Naive thymus-derived CD8-positive, alpha-beta T cell (primary cell): ENCODE measurements at regions of chr7 and their contacts with region 1.

Region 1: GRCh38 chr7:92528188-92528957 is at the starts of genes PEX1 and RBM48:
- DNase-seq: peak; percentile 88 to 98 (median 96)
- ATAC-seq: peak; percentile 88 to 90
- H3K4me3 Mint-ChIP-seq: peak within 1 kb of the TSS; percentile 81 to 96 (median 94)
- H3K27ac Mint-ChIP-seq: peak within 1 kb of the TSS; percentile 94 to 99 (median 98)
- H3K4me1 Mint-ChIP-seq: peaks cover 21 to 50% (median 36%) of the 10 kb centered on the region in 4 donors
- H3K27me3 Mint-ChIP-seq: no peaks in the 10 kb centered on the region
- polyA plus RNA-seq, gene PEX1: 7.9 to 10.1 (median 9.7) TPM
- polyA plus RNA-seq, gene RBM48: 25.6 to 28.9 (median 27.9) TPM

Region 2: GRCh38 chr7:92245487-92246362 is 282.6 kb before region 1 on chr7 and contains the starts of genes ANKIB1 and KRIT1:
- POLR2A ChIA-PET with region 1: interaction called, 10 read pairs
- DNase-seq: peak; percentile 77 to 94 (median 85)
- ATAC-seq: peak; percentile 81 to 85
- H3K4me3 Mint-ChIP-seq: peak within 1 kb of the TSS; percentile 93 to 99 (median 98)
- H3K27ac Mint-ChIP-seq: peak within 1 kb of the TSS; percentile 98 to 100 (median 99)
- H3K4me1 Mint-ChIP-seq: peaks cover 20 to 59% (median 45%) of the 10 kb centered on the region in 4 donors
- H3K27me3 Mint-ChIP-seq: no peaks in the 10 kb centered on the region
- polyA plus RNA-seq, gene ANKIB1: 5.1 to 12.7 (median 9.8) TPM
- polyA plus RNA-seq, gene KRIT1: 11.2 to 20.1 (median 17.6) TPM

Region 3: DNA sequence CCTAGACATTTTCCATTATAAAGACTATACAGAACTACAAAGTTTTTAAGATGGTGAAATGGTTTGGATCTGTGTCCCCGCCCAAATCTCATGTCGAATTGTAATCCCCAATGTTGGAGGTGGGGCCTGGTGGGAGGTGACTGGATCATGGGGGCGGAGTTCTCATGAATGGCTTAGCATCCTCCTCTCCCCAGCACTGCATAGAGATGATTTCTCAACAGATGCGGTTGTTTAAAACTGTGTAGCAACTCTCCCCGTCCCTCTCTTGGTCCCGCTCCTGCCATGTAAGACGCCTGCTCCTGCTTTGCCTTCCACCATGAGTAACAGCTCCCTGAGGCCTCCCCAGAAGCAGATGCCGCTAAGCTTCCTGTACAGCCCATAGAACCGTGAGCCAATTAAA is 60.2 kb after region 1 on chr7:
- POLR2A ChIA-PET with region 1: interaction called, 22 read pairs
- DNase-seq: no peak
- ATAC-seq: no peak
- H3K4me3 Mint-ChIP-seq: peak overlapping the region; percentile 85 to 99 (median 96)
- H3K27ac Mint-ChIP-seq: peak overlapping the region; percentile 48 to 98 (median 90)
- H3K4me1 Mint-ChIP-seq: peaks cover 28 to 62% (median 56%) of the 10 kb centered on the region in 4 donors
- H3K27me3 Mint-ChIP-seq: peaks cover 0 to 4% (median 0%) of the 10 kb centered on the region in 5 donors

Region 4: DNA sequence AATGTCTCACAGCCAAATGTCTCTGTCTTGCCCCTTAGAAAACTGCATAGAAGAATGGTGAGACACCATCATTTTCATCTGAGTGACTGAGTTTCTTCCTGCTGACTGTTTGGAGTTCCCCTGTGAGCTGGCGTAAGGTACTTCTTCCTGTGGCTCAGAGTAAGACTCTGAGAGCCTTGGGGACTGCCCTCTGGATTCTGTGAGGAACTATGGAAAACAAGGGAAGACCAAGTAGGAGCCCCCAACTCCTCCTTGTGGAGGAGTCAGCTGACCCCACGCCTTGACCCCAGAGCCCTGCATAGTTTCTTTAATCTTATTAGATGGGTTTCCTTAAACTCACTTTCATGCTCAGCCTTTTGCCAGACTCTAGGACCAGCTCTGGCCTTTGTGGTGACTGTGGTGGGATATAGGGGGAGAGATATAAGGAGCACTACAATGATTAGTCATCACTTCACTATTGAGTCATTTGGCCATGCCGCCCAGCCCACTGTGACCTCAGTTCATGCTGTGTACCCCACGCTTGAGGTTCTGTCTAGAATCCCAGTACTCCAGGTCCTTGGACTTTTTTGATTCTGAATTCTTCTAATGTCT is 113.6 kb after region 1 on chr7:
- POLR2A ChIA-PET with region 1: no interaction called
- DNase-seq: no peak
- ATAC-seq: peak; percentile 20 to 71
- H3K4me3 Mint-ChIP-seq: peak overlapping the region in 7 of 10 donors; percentile 8 to 63 (median 33)
- H3K27ac Mint-ChIP-seq: peak overlapping the region in 9 of 10 donors; percentile 12 to 95 (median 74)
- H3K4me1 Mint-ChIP-seq: peaks cover 15 to 75% (median 53%) of the 10 kb centered on the region in 4 donors
- H3K27me3 Mint-ChIP-seq: no peaks in the 10 kb centered on the region